ENCODE measurements at regions of chr13 and their contacts with region 1.

Region 1: GRCh38 chr13:29362849-29363604 is 232.5 kb downstream of the SLC7A1 start:
- DNase-seq: peak; percentile 32 to 39
- H3K4me3 ChIP-seq: no peak overlapping the region
- H3K27ac ChIP-seq: no peak overlapping the region
- H3K4me1 ChIP-seq: peaks cover 0 to 4% of the 10 kb centered on the region in 2 donors
- H3K27me3 ChIP-seq: no peaks in the 10 kb centered on the region
- CTCF ChIP-seq: peak; percentile 75 to 96 (median 85)
- POLR2A ChIP-seq: no peak

Region 2: GRCh38 chr13:28819735-28820098 is 543.3 kb before region 1 on chr13:
- intact Hi-C with region 1: loop called (anchors 10 kb)
- DNase-seq: peak; percentile 49 to 50
- H3K4me3 ChIP-seq: no peak overlapping the region
- H3K27ac ChIP-seq: no peak overlapping the region
- H3K4me1 ChIP-seq: peaks cover 4 to 7% of the 10 kb centered on the region in 2 donors
- H3K27me3 ChIP-seq: no peaks in the 10 kb centered on the region
- CTCF ChIP-seq: peak in 3 of 6 experiments; percentile 28 to 53 (median 50)
- POLR2A ChIP-seq: no peak